ENCODE measurements at regions of chr6 and their contacts with region 1.

Region 1: DNA sequence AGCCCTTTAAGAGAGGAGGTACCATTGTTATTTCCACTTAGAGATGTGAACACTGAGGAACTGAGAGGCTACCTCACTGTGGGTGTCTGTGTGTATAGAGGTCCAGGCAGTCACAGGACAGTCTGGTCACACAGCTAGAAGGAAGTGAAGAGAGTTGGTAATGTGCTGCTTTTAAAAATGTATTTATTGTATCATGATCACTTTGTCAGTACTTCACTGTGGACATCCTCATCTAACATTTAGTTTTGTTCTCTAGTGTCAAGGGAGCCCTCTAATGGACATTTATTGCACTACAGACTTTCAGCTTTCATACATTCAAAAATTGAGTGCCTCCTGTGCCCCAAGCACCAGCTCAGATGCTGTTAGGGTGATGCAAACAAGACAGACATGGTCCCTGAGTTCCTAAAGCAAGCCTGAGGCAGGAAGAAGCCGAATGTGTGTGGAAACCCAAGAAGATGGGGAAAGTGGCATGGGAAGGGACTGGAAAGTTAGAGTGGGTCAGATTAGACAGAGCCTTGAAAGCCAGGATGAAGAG is 123.0 kb downstream of the SLC16A10 start:
- DNase-seq: peak in 7 of 9 donors; percentile 46 to 73 (median 63)
- ATAC-seq: peak; percentile 88
- H3K4me3 ChIP-seq: no peak overlapping the region
- H3K4me3 Mint-ChIP-seq: no peak overlapping the region
- H3K27ac ChIP-seq: no peak overlapping the region
- H3K27ac Mint-ChIP-seq: peak overlapping the region in 1 of 9 donors; percentile 8
- H3K4me1 ChIP-seq: no peaks in the 10 kb centered on the region
- H3K4me1 Mint-ChIP-seq: peaks cover 0 to 18% (median 9%) of the 10 kb centered on the region in 7 donors
- H3K27me3 ChIP-seq: no peaks in the 10 kb centered on the region
- H3K27me3 Mint-ChIP-seq: no peaks in the 10 kb centered on the region

Region 2: DNA sequence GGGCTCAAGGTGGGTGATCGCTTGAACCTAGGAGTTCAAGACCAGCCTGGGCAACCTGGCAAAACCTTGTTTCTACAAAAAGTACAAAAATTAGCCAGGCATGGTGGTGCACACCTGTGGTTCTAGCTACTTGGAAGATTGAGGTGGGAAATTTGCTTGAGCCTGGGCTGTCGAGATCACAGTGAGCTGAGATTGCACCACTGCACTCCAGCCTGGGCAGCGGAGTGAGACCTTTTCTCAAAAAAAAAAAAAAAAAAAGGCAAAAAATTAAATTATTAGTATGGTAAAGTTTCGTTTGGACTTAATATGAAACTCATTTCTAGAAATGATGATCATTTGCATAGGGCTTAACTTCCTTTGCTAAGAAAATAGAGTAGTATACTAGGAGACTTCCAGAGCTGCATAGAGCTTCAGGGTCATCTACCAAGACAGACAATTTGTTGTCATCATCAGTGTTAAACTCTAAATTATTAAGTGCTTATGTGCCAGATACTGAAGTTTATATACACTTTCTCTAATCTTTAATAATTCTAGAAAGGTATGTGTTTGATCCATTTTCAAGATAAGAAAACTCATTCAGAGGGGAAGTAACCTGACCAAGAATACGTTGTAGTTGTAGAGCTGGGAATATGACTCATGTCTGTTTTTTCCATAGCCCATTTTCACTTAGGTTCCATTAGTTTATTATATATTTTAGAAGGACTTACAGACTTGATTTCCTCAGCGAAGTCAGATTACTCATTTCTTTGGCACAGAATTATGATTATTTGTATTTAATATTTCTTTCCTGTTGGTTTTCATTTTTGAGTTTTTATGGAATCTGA is 38.5 kb before region 1 on chr6:
- CTCF ChIA-PET with region 1: no interaction called
- POLR2A ChIA-PET with region 1: no interaction called
- intact Hi-C with region 1: loop called in 1 of 2 experiments (anchors 2 kb)
- DNase-seq: no peak
- ATAC-seq: no peak
- H3K4me3 ChIP-seq: no peak overlapping the region
- H3K4me3 Mint-ChIP-seq: no peak overlapping the region
- H3K27ac ChIP-seq: no peak overlapping the region
- H3K27ac Mint-ChIP-seq: no peak overlapping the region
- H3K4me1 ChIP-seq: peaks cover 0 to 20% of the 10 kb centered on the region in 2 donors
- H3K4me1 Mint-ChIP-seq: peaks cover 10 to 40% (median 26%) of the 10 kb centered on the region in 7 donors
- H3K27me3 ChIP-seq: no peaks in the 10 kb centered on the region
- H3K27me3 Mint-ChIP-seq: no peaks in the 10 kb centered on the region

Region 3: GRCh38 chr6:111423960-111424846 is 213.9 kb after region 1 on chr6:
- CTCF ChIA-PET with region 1: no interaction called
- POLR2A ChIA-PET with region 1: no interaction called
- intact Hi-C with region 1: no loop called
- DNase-seq: no peak
- ATAC-seq: no peak
- H3K4me3 ChIP-seq: no peak overlapping the region
- H3K4me3 Mint-ChIP-seq: peak overlapping the region in 1 of 10 donors; percentile 31
- H3K27ac ChIP-seq: no peak overlapping the region
- H3K27ac Mint-ChIP-seq: no peak overlapping the region
- H3K4me1 ChIP-seq: peaks cover 0 to 5% of the 10 kb centered on the region in 2 donors
- H3K4me1 Mint-ChIP-seq: peaks cover 26 to 63% (median 40%) of the 10 kb centered on the region in 7 donors
- H3K27me3 ChIP-seq: no peaks in the 10 kb centered on the region
- H3K27me3 Mint-ChIP-seq: no peaks in the 10 kb centered on the region